ENCODE measurements at regions of chr7 and their contacts with region 1.

Region 1: DNA sequence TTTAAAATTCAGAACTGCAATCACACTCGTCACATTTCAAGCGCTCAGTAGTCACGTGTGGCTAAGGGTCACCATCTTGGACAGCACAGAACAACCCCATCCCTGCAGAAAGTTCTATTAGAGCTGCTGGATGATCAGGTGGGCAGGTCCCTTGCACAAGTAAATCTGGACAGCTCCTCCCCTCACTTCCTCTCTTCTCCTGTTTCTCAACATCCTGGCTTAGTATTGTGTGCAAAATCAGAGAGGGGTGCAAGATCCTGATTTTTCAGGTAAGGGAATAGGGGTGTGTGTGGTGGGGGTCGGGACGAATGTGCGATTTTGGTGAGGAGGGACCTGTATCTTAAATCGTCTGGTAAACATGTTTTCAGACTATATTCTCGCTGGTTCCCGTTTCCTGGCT is at the start of gene GIMAP4:
- DNase-seq: peak; percentile 52
- H3K4me3 Mint-ChIP-seq: peak within 1 kb of the TSS; percentile 90
- H3K27ac Mint-ChIP-seq: peak within 1 kb of the TSS; percentile 92
- H3K4me1 Mint-ChIP-seq: peaks cover 75% of the 10 kb centered on the region
- H3K27me3 Mint-ChIP-seq: no peaks in the 10 kb centered on the region

Region 2: DNA sequence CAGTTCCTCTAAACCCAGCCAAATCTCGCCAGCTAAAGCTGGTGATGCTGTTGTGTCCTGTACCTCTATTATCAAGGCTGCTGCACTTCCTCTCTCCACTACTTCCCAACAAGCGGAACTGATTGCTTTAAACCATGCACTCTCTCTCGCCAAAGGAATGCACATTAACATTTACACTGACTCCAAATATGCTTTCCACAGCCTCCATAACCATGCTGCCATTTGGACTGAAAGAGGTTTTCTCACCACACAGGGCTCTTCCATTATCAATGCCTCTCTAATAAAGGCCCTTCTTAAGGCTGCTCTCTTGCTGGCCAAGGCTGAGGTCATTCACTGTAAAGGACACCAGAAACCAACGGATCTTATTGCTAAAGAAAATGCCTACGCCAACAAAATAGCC is 255.5 kb before region 1 on chr7:
- CTCF ChIA-PET with region 1: no interaction called
- DNase-seq: no peak
- H3K4me3 Mint-ChIP-seq: no peak overlapping the region
- H3K27ac Mint-ChIP-seq: no peak overlapping the region
- H3K4me1 Mint-ChIP-seq: peaks cover 3% of the 10 kb centered on the region
- H3K27me3 Mint-ChIP-seq: no peaks in the 10 kb centered on the region

Region 3: DNA sequence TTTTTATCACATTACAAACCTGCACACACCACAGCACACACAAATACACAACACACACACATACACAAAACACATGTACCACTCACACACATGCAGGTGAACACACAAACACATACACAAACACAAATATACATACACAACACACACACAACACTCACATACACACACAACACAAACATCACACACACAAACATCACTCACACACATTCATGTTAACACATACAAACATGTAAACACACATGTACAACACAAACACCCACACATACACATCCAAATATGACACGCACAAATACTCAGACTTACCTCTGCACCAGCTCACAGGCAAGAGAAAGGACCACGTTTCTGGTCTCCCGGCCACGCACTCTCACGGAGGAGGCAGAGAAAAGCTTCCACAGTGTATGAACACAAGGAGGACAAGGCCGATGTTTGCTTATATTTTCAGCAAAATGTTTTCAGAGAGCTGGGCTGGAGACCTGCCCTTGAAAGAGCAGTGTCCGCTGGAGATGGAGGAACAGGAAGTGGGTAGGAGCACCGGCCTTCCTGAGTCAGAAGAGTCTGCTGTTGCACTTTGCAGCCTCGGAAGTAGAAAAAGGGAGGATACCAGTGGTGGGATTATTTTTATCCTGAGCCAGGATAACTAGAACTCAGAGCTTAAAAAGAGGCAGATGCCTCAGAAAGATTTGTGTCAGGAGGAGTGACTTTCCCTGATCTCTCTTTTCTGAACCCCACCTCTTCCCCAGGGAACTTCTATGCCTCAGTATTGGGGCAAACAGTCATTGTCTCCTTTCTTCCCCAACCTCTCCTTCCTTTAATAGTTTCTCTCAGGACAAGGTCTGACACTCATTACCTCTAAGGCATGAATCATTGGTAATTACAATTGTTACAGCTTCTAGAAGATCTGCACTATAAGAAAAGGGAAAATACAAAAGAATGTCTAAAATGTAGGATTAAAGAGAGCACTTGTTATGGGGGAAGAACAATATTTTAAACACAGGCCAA is 65.0 kb after region 1 on chr7 and contains the start of gene GIMAP6:
- CTCF ChIA-PET with region 1: interaction called, 10 read pairs
- DNase-seq: peak; percentile 62
- H3K4me3 Mint-ChIP-seq: peak within 1 kb of the TSS; percentile 83
- H3K27ac Mint-ChIP-seq: peak within 1 kb of the TSS; percentile 86
- H3K4me1 Mint-ChIP-seq: peaks cover 66% of the 10 kb centered on the region
- H3K27me3 Mint-ChIP-seq: no peaks in the 10 kb centered on the region

Region 4: GRCh38 chr7:150668472-150668911 is 101.3 kb after region 1 on chr7:
- CTCF ChIA-PET with region 1: interaction called, 10 read pairs
- DNase-seq: peak; percentile 73
- H3K4me3 Mint-ChIP-seq: peak overlapping the region; percentile 55
- H3K27ac Mint-ChIP-seq: peak overlapping the region; percentile 99
- H3K4me1 Mint-ChIP-seq: peaks cover 90% of the 10 kb centered on the region
- H3K27me3 Mint-ChIP-seq: no peaks in the 10 kb centered on the region

Region 5: DNA sequence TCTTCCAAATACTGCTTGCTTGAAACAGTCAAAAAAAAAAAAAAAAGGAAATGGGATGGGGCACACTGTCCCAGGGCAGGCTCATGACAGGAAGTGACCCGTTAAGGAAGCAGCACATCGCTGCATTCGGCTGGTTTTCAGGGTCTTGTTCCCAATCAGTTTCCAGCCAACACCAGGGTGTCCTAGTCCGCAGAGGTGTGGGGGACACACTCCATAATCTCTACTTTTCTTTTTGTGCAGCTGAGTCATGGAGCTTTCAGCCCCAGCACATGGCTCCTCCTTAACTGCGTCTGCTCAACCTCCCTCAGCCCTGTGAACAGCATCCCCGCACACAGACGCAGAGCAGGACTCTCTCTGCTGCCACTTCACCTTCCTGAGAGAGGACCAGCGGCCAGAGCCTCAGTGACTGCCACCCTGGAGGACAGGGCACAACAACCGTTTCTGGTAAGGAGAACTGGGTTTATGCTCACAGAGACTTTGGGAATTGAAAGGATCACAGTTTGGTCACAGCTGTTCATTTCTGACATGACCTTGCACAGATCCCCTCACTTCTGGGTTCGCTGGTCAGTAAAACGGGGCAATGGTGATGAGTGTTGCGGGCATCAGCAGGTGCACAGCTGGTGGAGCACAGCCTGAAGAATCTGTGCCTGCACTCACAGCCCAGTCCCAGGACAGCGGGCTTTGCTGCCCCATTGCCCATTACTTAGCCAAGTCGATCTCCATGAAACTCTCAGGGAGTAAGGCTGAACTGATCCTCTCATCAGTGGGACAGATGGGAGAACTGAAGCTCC is 170.3 kb after region 1 on chr7 and contains the start of gene GIMAP5:
- CTCF ChIA-PET with region 1: interaction called, 16 read pairs
- DNase-seq: peak; percentile 73
- H3K4me3 Mint-ChIP-seq: peak within 1 kb of the TSS; percentile 88
- H3K27ac Mint-ChIP-seq: peak within 1 kb of the TSS; percentile 91
- H3K4me1 Mint-ChIP-seq: peaks cover 72% of the 10 kb centered on the region
- H3K27me3 Mint-ChIP-seq: no peaks in the 10 kb centered on the region

Region 6: DNA sequence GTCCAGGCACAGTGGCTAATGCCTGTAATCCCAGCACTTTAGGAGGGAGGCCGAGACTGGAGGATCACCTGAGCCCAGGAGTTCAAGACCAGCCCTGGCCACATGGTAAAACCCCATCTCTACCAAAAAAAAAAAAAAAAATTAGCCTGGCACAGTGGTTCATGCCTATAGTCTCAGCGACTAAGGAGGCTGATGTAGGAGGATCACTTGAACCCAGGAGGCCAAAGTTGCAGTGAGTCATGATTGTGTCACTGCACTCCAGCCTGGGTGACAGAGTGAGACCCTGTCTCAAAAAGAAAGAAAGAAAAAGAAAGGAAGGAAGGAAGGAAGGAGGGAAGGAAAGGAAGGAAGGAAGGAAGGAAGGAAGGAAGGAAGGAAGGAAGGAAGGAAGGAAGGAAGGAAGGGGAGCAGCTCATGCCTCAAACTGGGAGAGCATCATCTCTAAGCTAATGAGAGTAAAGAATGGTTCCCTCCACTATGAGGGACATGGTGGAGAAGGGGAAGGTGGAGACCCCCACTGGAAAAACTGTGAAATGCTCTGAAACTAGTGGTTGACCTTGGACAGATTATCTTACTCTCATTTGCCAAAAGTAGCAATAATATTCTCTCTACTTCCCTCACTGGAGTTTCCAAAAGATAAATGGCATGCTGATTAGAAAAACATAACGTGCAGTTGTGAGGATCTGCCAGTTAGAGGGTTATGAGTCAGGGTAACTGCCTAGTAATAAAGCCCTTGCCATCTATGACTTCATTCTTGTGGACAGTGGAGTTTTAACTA is 186.8 kb after region 1 on chr7:
- CTCF ChIA-PET with region 1: interaction called, 30 read pairs
- DNase-seq: no peak
- H3K4me3 Mint-ChIP-seq: peak overlapping the region; percentile 31
- H3K27ac Mint-ChIP-seq: peak overlapping the region; percentile 92
- H3K4me1 Mint-ChIP-seq: peaks cover 77% of the 10 kb centered on the region
- H3K27me3 Mint-ChIP-seq: no peaks in the 10 kb centered on the region

Measured in activated naive CD4-positive, alpha-beta T cell treated with anti-CD3 and anti-CD28 coated beads, Interleukin-2, amount 10 ng/mL, durations not matched to agents 7 days and 5 days (primary cell).